ENCODE measurements at regions of chr6 and their contacts with region 1.

Region 1: GRCh38 chr6:170295510-170296422 is 4.9 kb upstream of the DLL1 start:
- DNase-seq: no peak
- ATAC-seq: peak; percentile 30; the same call in 1 of the 2 replicates
- H3K4me3 ChIP-seq: peak overlapping the region; percentile 44 to 54
- H3K27ac ChIP-seq: no peak overlapping the region
- H3K4me1 ChIP-seq: peaks cover 11% of the 10 kb centered on the region
- H3K27me3 ChIP-seq: peaks cover 41% of the 10 kb centered on the region
- CTCF ChIP-seq: no peak

Region 2: GRCh38 chr6:169789982-169790927 is 505.5 kb before region 1 on chr6:
- CTCF ChIA-PET with region 1: interaction called, 3 read pairs
- POLR2A ChIA-PET with region 1: no interaction called
- in situ Hi-C with region 1: no loop called
- intact Hi-C with region 1: loop called (anchors 5 kb)
- DNase-seq: peak; percentile 61
- ATAC-seq: peak; percentile 98
- H3K4me3 ChIP-seq: peak overlapping the region; percentile 48 to 68
- H3K27ac ChIP-seq: peak overlapping the region; percentile 65
- H3K4me1 ChIP-seq: peaks cover 11% of the 10 kb centered on the region
- H3K27me3 ChIP-seq: peaks cover 3% of the 10 kb centered on the region; the same call in 1 of the 2 replicates
- CTCF ChIP-seq: peak; percentile 100

Measured in Panc1 (cell line).